ENCODE measurements at regions of chr7 and their contacts with region 1.

Region 1: GRCh38 chr7:30276203-30276900 is 8.0 kb upstream of the ZNRF2 start:
- DNase-seq: no peak
- H3K4me3 ChIP-seq: no peak overlapping the region
- H3K27ac ChIP-seq: no peak overlapping the region
- H3K4me1 ChIP-seq: no peaks in the 10 kb centered on the region
- H3K27me3 ChIP-seq: no peaks in the 10 kb centered on the region
- CTCF ChIP-seq: peak; percentile 82

Region 2: GRCh38 chr7:30164567-30164966 is 111.8 kb before region 1 on chr7:
- intact Hi-C with region 1: loop called (anchors 10 kb)
- DNase-seq: no peak
- H3K4me3 ChIP-seq: no peak overlapping the region
- H3K27ac ChIP-seq: no peak overlapping the region
- H3K4me1 ChIP-seq: peaks cover 39% of the 10 kb centered on the region
- H3K27me3 ChIP-seq: no peaks in the 10 kb centered on the region
- CTCF ChIP-seq: peak; percentile 73

Measured in left ventricle myocardium inferior (tissue), 1 donor.